ENCODE measurements at regions of chr14 and their contacts with region 1.

Region 1: GRCh38 chr14:37903343-37904191 is 304.1 kb upstream of the SSTR1 start:
- DNase-seq: peak in 1 of 2 experiments; percentile 53
- H3K4me3 ChIP-seq: no peak overlapping the region
- H3K4me3 Mint-ChIP-seq: no peak overlapping the region
- H3K27ac Mint-ChIP-seq: no peak overlapping the region
- H3K4me1 ChIP-seq: no peaks in the 10 kb centered on the region
- H3K4me1 Mint-ChIP-seq: no peaks in the 10 kb centered on the region
- H3K27me3 ChIP-seq: no peaks in the 10 kb centered on the region
- H3K27me3 Mint-ChIP-seq: no peaks in the 10 kb centered on the region
- CTCF ChIP-seq: peak; percentile 55 to 66

Region 2: GRCh38 chr14:38003746-38004609 is 100.4 kb after region 1 on chr14:
- CTCF ChIA-PET with region 1: no interaction called
- POLR2A ChIA-PET with region 1: no interaction called
- intact Hi-C with region 1: no loop called
- DNase-seq: no peak
- H3K4me3 ChIP-seq: no peak overlapping the region
- H3K4me3 Mint-ChIP-seq: no peak overlapping the region
- H3K27ac Mint-ChIP-seq: no peak overlapping the region
- H3K4me1 ChIP-seq: no peaks in the 10 kb centered on the region
- H3K4me1 Mint-ChIP-seq: no peaks in the 10 kb centered on the region
- H3K27me3 ChIP-seq: no peaks in the 10 kb centered on the region
- H3K27me3 Mint-ChIP-seq: peaks cover 2% of the 10 kb centered on the region
- CTCF ChIP-seq: no peak

Region 3: GRCh38 chr14:38016497-38016896 is 112.9 kb after region 1 on chr14:
- CTCF ChIA-PET with region 1: no interaction called
- POLR2A ChIA-PET with region 1: no interaction called
- intact Hi-C with region 1: loop called (anchors 2 kb)
- DNase-seq: peak in 1 of 2 experiments; percentile 11
- H3K4me3 ChIP-seq: no peak overlapping the region
- H3K4me3 Mint-ChIP-seq: no peak overlapping the region
- H3K27ac Mint-ChIP-seq: no peak overlapping the region
- H3K4me1 ChIP-seq: no peaks in the 10 kb centered on the region
- H3K4me1 Mint-ChIP-seq: no peaks in the 10 kb centered on the region
- H3K27me3 ChIP-seq: no peaks in the 10 kb centered on the region
- H3K27me3 Mint-ChIP-seq: peaks cover 2% of the 10 kb centered on the region
- CTCF ChIP-seq: peak; percentile 36 to 40

Region 4: DNA sequence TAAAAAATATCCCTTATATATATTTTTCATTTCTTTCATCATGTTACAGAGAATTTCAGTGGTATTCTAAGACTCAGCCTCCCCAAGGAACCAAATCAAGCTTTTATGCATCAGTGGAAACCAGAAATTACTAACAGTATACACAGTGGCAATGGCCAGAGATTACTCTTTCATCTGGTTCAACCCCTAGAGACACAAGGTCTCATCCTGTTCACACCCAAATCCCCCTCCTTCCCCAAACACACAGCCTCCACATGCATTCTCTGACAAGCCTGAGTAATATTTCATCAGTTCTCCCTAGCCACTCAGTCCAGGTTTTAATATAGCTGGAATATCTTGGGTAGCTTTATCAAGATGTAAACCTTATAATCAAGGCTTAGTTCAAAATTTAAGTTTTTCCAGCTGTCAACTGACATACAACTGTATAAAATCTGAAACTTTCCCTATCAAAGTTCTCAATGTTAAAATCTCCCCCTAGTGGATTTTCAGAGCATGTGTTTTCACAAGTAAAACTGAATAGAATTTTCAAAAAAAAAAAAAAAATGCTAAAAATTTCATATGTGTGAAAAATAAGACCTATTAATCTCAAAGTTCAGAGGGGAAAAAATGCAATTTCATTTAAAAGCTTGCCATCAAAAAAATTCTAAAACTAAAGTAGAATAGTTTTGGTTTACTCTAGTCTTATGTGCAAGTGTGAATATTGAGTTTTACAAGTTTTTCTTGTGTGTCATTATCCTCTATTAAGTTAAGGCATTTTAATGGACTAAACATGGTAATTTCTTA is 293.6 kb after region 1 on chr14:
- CTCF ChIA-PET with region 1: no interaction called
- POLR2A ChIA-PET with region 1: no interaction called
- intact Hi-C with region 1: loop called (anchors 1 kb)
- DNase-seq: no peak
- H3K4me3 ChIP-seq: no peak overlapping the region
- H3K4me3 Mint-ChIP-seq: no peak overlapping the region
- H3K27ac Mint-ChIP-seq: no peak overlapping the region
- H3K4me1 ChIP-seq: no peaks in the 10 kb centered on the region
- H3K4me1 Mint-ChIP-seq: no peaks in the 10 kb centered on the region
- H3K27me3 ChIP-seq: no peaks in the 10 kb centered on the region
- H3K27me3 Mint-ChIP-seq: peaks cover 5% of the 10 kb centered on the region
- CTCF ChIP-seq: peak; percentile 36 to 46

Region 5: GRCh38 chr14:38605193-38606114 is 701.9 kb after region 1 on chr14:
- CTCF ChIA-PET with region 1: no interaction called
- POLR2A ChIA-PET with region 1: no interaction called
- intact Hi-C with region 1: loop called (anchors 5 kb)
- DNase-seq: no peak
- H3K4me3 ChIP-seq: no peak overlapping the region
- H3K4me3 Mint-ChIP-seq: no peak overlapping the region
- H3K27ac Mint-ChIP-seq: no peak overlapping the region
- H3K4me1 ChIP-seq: no peaks in the 10 kb centered on the region
- H3K4me1 Mint-ChIP-seq: no peaks in the 10 kb centered on the region
- H3K27me3 ChIP-seq: no peaks in the 10 kb centered on the region
- H3K27me3 Mint-ChIP-seq: peaks cover under 1% of the 10 kb centered on the region
- CTCF ChIP-seq: peak; percentile 10 to 29

Region 6: GRCh38 chr14:38867561-38868150 is 964.1 kb after region 1 on chr14:
- CTCF ChIA-PET with region 1: no interaction called
- POLR2A ChIA-PET with region 1: no interaction called
- intact Hi-C with region 1: loop called (anchors 2 kb)
- DNase-seq: peak; percentile 73 to 74
- H3K4me3 ChIP-seq: no peak overlapping the region
- H3K4me3 Mint-ChIP-seq: no peak overlapping the region
- H3K27ac Mint-ChIP-seq: no peak overlapping the region
- H3K4me1 ChIP-seq: peaks cover 3% of the 10 kb centered on the region; the same call in 1 of the 2 replicates
- H3K4me1 Mint-ChIP-seq: peaks cover 9% of the 10 kb centered on the region
- H3K27me3 ChIP-seq: no peaks in the 10 kb centered on the region; the same call in 1 of the 2 replicates
- H3K27me3 Mint-ChIP-seq: no peaks in the 10 kb centered on the region
- CTCF ChIP-seq: peak; percentile 73 to 80